ENCODE measurements at regions of chr19 and their contacts with region 1.

Region 1: DNA sequence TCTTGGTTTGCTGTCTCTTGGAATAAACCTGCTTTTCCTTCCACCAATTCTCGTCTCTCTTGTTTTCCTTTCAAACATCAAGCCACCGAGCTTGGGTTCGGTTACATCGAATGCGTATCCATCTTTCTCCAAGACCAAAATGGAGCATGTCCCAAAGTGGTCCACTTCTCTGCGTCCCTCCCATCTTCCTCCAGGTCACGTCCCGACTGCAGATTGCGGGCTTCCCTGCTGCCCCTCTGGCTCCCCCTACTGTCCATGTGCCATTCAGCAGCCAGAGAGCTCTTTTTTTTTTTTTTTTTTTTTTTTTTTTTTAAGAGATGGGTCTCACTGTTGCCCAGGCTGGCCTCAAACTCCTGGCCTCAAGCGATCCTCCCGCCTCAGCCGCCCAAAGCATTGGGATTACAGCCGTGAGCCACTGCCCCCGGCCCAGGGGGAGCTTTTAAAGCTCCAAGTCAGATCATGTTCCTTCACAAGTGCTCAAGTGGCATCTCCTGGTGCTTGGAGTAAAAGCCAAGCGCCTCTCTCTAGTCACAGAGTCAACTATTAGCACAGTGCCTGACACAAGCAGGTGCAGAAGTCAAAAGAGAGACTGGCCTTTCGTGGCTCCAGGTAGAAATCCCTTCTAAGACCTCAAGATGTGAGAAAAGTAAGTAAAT is 10.0 kb downstream of the COL5A3 start:
- DNase-seq: peak; percentile 80
- H3K4me3 Mint-ChIP-seq: no peak overlapping the region
- H3K27ac Mint-ChIP-seq: no peak overlapping the region
- H3K4me1 Mint-ChIP-seq: peaks cover 3% of the 10 kb centered on the region
- H3K27me3 Mint-ChIP-seq: peaks cover 21% of the 10 kb centered on the region

Region 2: DNA sequence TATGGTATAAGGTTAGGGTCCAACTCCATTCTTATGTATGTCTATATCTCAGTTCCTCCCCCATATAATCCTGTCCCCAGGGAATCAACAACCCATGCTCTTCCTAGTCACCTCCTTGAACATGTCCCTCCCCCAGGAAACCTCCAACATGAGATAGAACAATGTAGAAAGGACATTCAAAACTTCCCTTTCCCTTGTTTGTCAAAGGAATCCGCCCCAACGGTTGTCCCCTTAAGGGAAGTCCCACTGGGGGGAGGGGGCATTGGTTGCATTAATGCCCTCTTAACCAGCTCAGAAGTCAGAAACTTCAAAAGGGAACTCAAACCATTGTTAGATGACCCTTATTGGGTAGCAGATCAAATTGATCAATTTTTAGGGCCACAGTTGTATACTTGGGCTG is 372.4 kb before region 1 on chr19:
- CTCF ChIA-PET with region 1: no interaction called
- intact Hi-C with region 1: loop called (anchors 5 kb)
- DNase-seq: no peak
- H3K4me3 Mint-ChIP-seq: no peak overlapping the region
- H3K27ac Mint-ChIP-seq: no peak overlapping the region
- H3K4me1 Mint-ChIP-seq: no peaks in the 10 kb centered on the region
- H3K27me3 Mint-ChIP-seq: no peaks in the 10 kb centered on the region

Region 3: DNA sequence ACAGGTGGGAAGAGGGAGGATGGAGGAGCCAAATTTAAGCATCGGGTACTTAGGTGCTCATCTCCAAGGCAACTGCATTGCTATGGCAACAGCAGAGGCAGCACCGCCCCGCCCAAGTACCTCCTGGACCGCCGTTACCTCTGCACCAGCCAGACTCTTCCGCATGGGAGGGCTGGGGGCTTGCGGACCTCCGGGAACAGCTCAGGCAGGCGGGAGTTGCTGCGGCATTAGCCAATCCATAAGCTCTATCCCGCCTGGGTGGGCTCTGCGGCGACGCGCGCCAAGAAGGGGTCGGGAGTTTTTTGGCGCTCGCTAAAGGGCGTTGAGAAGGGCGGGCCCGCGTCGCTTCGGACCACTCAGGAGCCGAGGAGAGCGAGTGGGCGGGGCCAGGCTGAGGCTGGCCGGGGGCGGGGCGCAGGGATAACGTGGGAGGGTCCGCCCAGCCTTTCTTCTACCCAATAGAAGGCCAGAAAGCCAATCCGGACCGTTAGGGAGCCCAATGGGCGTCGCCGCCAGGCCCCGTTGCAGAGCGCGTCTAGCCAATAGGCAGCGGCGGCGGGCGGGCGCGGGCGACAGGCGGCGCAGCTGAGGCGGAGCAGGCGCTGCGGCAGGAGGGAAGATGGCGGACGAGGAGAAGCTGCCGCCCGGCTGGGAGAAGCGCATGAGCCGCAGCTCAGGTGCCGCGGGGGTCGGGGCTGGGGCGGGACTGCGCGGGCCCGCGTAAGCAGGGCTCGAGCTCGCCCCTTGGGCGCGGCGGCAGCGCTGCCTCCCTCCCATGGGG is 165.4 kb before region 1 on chr19 and contains the start of gene PIN1:
- CTCF ChIA-PET with region 1: no interaction called
- intact Hi-C with region 1: loop called (anchors 10 kb)
- DNase-seq: peak; percentile 99
- H3K4me3 Mint-ChIP-seq: peak within 1 kb of the TSS; percentile 84
- H3K27ac Mint-ChIP-seq: peak within 1 kb of the TSS; percentile 85
- H3K4me1 Mint-ChIP-seq: peaks cover 27% of the 10 kb centered on the region
- H3K27me3 Mint-ChIP-seq: no peaks in the 10 kb centered on the region
- total RNA-seq, gene PIN1: 84.5 to 88.1 TPM

Region 4: GRCh38 chr19:9857920-9858746 is 142.2 kb before region 1 on chr19:
- CTCF ChIA-PET with region 1: no interaction called
- intact Hi-C with region 1: no loop called
- DNase-seq: peak; percentile 32
- H3K4me3 Mint-ChIP-seq: peak overlapping the region; percentile 53
- H3K27ac Mint-ChIP-seq: peak overlapping the region; percentile 91
- H3K4me1 Mint-ChIP-seq: peaks cover 67% of the 10 kb centered on the region
- H3K27me3 Mint-ChIP-seq: no peaks in the 10 kb centered on the region

Region 5: DNA sequence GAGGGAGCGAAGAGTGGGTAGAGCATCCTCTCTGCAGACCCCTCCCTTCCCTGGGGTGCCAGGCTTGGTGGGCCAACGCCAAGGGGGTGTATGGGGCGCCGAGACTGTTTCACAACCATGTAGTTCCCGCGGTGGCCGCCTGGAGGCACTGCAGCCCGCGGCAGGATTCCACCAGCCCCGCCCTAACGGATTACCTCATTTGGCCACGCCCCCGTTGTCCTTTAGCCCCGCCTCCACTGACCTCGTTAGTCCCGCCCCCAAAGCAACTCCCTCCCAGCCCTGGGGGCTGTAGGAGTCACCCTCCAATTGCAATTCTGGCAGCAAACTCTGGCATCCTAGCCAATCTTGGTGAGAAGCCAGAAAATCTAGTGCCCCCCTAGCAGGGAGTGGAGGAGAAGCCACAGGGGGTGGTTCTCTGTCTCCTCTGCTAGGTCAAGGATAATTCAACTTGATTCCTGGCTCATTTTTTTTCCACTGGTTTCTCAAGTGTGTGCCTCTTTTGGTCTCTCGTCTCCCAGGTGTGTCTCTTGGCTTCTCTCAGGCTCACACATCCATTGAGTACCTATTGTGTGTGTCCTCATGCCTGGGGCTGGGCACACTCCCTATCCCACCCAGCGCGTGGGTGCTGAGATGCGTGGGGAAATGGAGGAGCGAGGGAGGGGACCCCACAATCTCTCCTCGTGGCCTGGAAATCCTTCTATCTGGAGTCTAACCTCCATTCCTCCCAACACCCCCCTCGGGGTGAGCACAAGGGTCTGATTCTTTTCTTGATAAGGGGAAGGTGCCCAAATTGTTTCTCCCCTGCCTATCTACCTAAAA is 66.0 kb before region 1 on chr19:
- CTCF ChIA-PET with region 1: interaction called, 40 read pairs
- intact Hi-C with region 1: loop called (anchors 1 kb)
- DNase-seq: peak; percentile 91
- H3K4me3 Mint-ChIP-seq: no peak overlapping the region
- H3K27ac Mint-ChIP-seq: no peak overlapping the region
- H3K4me1 Mint-ChIP-seq: peaks cover 28% of the 10 kb centered on the region
- H3K27me3 Mint-ChIP-seq: peaks cover 56% of the 10 kb centered on the region

Region 6: GRCh38 chr19:10027158-10027693 is 26.9 kb after region 1 on chr19:
- CTCF ChIA-PET with region 1: interaction called, 19 read pairs
- intact Hi-C with region 1: no loop called
- DNase-seq: no peak
- H3K4me3 Mint-ChIP-seq: no peak overlapping the region
- H3K27ac Mint-ChIP-seq: no peak overlapping the region
- H3K4me1 Mint-ChIP-seq: peaks cover 2% of the 10 kb centered on the region
- H3K27me3 Mint-ChIP-seq: peaks cover 13% of the 10 kb centered on the region

Region 7: GRCh38 chr19:10061717-10062310 is 61.5 kb after region 1 on chr19:
- CTCF ChIA-PET with region 1: interaction called, 4 read pairs
- intact Hi-C with region 1: loop called (anchors 2 kb)
- DNase-seq: no peak
- H3K4me3 Mint-ChIP-seq: no peak overlapping the region
- H3K27ac Mint-ChIP-seq: no peak overlapping the region
- H3K4me1 Mint-ChIP-seq: no peaks in the 10 kb centered on the region
- H3K27me3 Mint-ChIP-seq: peaks cover 7% of the 10 kb centered on the region

Measured in activated naive CD4-positive, alpha-beta T cell treated with anti-CD3 and anti-CD28 coated beads for 36 hours (primary cell).